ENCODE measurements at regions of chr11 and their contacts with region 1.

Region 1: GRCh38 chr11:114598461-114598860 is 2.9 kb upstream of the NXPE4 start:
- DNase-seq: peak; percentile 17
- H3K4me3 ChIP-seq: no peak overlapping the region
- H3K27ac ChIP-seq: no peak overlapping the region
- H3K4me1 ChIP-seq: no peaks in the 10 kb centered on the region
- H3K27me3 ChIP-seq: no peaks in the 10 kb centered on the region
- CTCF ChIP-seq: no peak

Region 2: DNA sequence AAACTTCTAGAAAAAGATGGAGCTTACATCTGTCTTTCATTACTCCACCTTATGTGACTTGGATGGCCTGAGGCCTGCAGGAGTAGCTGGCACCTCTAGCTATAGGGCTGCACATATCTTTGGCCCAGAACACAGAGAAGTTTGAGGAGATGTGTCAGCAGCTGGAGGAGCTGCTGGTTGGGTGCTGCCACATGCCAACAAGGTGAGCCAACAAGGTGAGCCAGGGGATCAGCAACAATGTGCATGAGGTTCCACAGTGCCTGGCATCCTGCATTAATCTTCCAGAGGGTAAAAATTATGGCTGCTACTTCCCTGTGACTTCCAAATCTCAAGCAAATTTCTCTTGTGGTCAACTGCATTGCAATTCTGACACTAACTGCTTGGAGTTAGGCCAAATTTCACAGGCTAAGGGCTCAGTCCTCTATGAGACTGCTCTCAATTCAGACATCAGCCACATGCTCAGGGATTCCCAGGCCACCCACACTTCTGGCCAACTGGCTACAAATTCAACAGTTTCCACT is 182.0 kb before region 1 on chr11:
- intact Hi-C with region 1: no loop called
- DNase-seq: no peak
- H3K4me3 ChIP-seq: no peak overlapping the region
- H3K27ac ChIP-seq: no peak overlapping the region
- H3K4me1 ChIP-seq: no peaks in the 10 kb centered on the region
- H3K27me3 ChIP-seq: no peaks in the 10 kb centered on the region
- CTCF ChIP-seq: no peak

Region 3: DNA sequence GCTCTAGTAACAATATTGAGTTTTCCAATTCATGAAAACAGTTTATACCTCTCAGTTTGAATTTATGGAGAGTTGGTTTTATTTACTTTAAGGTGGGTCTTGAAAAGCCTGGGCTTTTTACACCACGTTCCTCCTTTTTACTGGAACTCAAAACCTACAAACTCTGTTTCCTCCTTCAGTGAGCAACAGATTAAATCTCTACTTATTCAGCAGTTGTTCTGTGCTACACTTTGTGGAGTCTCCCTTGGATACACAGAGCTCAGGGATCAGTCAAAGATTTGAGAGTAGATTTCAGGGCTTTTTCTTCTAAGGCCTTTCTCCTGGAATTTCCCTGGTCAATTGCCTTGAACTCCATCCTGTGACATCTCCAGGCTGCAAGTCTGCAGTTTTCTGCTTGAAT is 42.3 kb before region 1 on chr11:
- intact Hi-C with region 1: loop called (anchors 5 kb)
- DNase-seq: no peak
- H3K4me3 ChIP-seq: no peak overlapping the region
- H3K27ac ChIP-seq: peak overlapping the region; percentile 79
- H3K4me1 ChIP-seq: no peaks in the 10 kb centered on the region
- H3K27me3 ChIP-seq: no peaks in the 10 kb centered on the region
- CTCF ChIP-seq: no peak

Region 4: DNA sequence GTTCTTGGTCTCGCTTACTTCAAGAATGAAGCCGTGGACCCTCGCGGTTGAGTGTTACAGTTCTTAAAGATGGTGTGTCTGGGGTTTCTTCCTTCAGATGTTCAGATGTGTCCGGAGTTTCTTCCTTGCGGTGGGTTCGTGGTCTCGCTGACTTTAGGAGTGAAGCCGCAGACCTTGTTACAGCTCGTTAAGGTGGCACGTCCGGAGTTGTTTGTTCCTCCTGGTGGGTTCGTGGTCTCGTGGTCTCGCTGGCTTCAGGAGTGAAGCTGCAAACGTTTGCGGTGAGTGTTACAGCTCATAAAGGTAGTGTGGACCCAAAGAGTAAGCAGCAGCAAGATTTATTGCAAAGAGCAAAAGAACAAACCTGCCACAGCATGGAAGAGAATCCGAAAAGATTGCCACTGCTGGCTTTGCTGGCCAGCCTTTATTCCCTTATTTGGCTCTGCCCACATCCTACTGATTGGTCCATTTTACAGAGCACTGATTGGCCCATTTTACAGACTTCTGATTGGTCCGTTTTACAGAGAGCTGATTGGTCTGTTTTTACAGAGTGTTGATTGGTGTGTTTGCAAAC is 52.8 kb after region 1 on chr11:
- intact Hi-C with region 1: loop called (anchors 5 kb)
- DNase-seq: no peak
- H3K4me3 ChIP-seq: peak overlapping the region; percentile 26
- H3K27ac ChIP-seq: peak overlapping the region; percentile 81
- H3K4me1 ChIP-seq: peaks cover 3% of the 10 kb centered on the region
- H3K27me3 ChIP-seq: no peaks in the 10 kb centered on the region
- CTCF ChIP-seq: no peak

Measured in colonic mucosa (tissue), 4 donors.